Endothelial cell of umbilical vein (primary cell): ENCODE measurements at regions of chr6 and their contacts with region 1.

Region 1: GRCh38 chr6:89371849-89372505 is 19.5 kb upstream of the UBE2J1 start:
- DNase-seq: peak; percentile 61
- H3K4me3 ChIP-seq: no peak overlapping the region
- H3K27ac ChIP-seq: no peak overlapping the region
- H3K4me1 ChIP-seq: peaks cover 3% of the 10 kb centered on the region
- H3K27me3 ChIP-seq: no peaks in the 10 kb centered on the region
- CTCF ChIP-seq: peak; percentile 96 to 98
- POLR2A ChIP-seq: no peak

Region 2: DNA sequence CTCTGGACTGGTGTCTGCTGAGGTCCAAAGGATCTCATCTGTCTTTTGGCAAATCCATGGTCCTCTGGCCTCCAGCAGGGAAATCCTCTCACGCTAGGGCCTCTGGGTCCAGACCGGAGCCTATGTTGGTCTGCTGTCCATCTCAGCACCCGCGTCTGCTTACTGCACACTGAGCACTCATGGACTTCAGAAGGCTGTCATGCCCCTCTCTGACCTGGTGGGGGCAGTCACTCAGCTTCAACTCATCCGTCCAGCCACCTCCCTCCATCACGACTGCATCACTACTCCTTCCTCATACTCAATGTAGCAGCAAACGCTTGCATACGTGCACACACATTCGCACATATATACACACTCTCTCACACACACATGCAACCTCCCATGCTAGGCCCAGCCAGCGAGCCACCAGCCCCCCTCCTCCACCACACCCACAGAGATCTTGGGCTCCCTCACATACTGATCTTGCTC is 90.2 kb before region 1 on chr6:
- CTCF ChIA-PET with region 1: interaction called, 13 read pairs
- POLR2A ChIA-PET with region 1: no interaction called
- dilution Hi-C with region 1: no loop called
- intact Hi-C with region 1: loop called (anchors 1 kb)
- DNase-seq: peak; percentile 47
- H3K4me3 ChIP-seq: no peak overlapping the region
- H3K27ac ChIP-seq: no peak overlapping the region
- H3K4me1 ChIP-seq: no peaks in the 10 kb centered on the region
- H3K27me3 ChIP-seq: peaks cover 0 to 2% of the 10 kb centered on the region in 2 experiments
- CTCF ChIP-seq: peak; percentile 67 to 69
- POLR2A ChIP-seq: no peak

Region 3: DNA sequence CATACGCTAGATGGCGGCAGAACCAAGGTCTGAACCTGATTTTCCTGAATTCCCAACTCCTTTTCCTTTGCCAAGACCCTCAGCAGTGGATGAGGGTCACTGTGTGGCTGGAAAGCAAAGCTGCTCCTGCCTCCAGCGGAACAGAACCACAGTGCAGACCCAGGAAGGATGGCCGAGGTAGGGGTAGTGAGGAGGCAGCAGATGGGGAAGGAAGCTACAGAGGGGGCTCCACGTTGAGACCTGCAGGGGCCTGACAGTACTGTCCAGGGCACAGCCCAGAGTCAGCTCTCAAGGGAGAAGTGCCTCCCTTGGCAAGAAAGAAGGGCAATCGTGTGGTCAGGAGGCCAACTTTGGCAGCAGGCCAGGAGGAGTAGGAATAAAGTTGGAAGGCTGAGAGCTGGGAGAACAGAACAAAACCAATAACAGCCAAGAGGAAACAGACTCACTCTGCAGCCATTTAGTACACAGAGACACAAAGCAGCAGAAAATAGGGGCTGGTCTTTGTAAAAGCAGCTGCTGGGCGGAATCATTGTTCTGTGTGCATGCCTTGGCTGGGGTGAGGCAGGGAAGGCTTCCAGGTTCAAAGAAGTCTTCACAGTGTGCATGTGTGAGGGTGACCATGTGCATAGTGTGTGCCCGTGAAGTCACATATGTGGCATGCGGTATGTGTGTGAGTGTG is 60.0 kb before region 1 on chr6:
- CTCF ChIA-PET with region 1: interaction called, 102 read pairs
- POLR2A ChIA-PET with region 1: no interaction called
- dilution Hi-C with region 1: no loop called
- intact Hi-C with region 1: loop called (anchors 1 kb)
- DNase-seq: peak; percentile 95
- H3K4me3 ChIP-seq: no peak overlapping the region
- H3K27ac ChIP-seq: peak overlapping the region; percentile 67
- H3K4me1 ChIP-seq: peaks cover 22% of the 10 kb centered on the region
- H3K27me3 ChIP-seq: no peaks in the 10 kb centered on the region
- CTCF ChIP-seq: peak; percentile 51 to 81
- POLR2A ChIP-seq: no peak

Region 4: DNA sequence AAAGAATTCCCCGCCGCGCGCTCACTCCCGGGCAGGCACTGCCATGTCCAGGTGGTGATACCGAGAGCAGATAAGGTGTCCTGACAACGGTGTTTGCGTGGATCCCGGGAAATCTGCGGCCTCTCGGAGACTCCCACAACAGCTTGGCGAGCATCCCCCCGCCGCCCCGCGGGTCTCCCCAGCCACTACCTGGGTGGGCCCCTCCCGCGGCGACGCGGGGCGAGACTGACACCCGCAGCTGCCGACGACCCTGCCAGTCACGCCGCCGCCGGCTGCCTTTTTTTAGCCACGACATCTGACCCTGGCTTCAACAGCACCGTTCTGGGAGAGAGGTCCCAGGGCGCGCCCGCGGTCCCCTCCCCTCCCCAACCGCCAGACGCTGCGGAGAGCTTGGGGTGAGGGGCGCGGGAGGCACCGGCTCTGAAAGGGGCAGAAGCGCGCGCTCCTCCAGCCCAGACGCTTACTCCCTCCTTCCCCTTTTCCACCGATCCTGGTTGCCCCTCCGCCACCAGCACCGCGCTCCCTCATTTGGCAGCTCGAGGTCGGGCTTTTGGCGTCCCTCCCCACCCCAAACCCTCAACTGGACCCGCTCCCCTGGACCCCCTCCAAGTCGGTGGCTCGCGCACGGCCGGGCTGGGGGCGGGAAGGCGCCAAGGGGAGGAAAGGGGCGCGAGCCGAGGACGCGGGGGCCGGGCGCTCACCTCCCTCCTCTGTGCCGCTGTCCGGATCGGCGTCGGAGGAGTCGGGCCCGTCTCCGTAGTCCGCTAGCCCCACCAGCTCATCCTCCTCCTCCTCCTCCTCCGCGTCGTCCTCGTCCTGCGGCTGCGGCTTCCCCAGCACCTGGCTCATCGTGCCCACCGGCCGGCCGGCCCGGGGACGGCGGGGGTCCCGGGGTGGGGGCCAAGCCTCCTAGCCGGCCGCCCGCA is 39.4 kb after region 1 on chr6:
- CTCF ChIA-PET with region 1: interaction called, 7 read pairs
- POLR2A ChIA-PET with region 1: no interaction called
- dilution Hi-C with region 1: no loop called
- intact Hi-C with region 1: loop called (anchors 1 kb)
- DNase-seq: no peak
- H3K4me3 ChIP-seq: peak overlapping the region; percentile 28 to 38 (median 34)
- H3K27ac ChIP-seq: no peak overlapping the region
- H3K4me1 ChIP-seq: peaks cover 8% of the 10 kb centered on the region
- H3K27me3 ChIP-seq: peaks cover 51 to 58% of the 10 kb centered on the region in 2 experiments
- CTCF ChIP-seq: no peak
- POLR2A ChIP-seq: no peak

Region 5: DNA sequence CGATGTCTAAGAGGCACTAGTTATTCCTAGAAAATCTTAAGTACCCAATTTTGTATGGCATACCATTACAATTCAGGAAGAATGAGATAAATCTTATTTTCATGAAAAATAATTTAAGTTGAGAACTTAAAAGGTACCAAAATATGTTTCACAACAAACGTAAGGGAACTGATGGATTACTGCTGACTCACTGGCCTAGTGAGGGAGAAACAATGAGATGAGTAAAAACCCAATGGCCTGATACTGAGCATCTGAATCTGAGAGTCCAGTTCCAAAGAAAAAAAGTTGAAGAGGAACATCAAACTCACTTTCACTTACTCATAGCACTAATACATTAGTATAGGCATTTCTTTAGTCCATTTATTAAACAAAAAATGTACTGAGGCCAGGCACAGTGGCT is 391.6 kb after region 1 on chr6:
- CTCF ChIA-PET with region 1: no interaction called
- POLR2A ChIA-PET with region 1: no interaction called
- dilution Hi-C with region 1: no loop called
- intact Hi-C with region 1: no loop called
- DNase-seq: no peak
- H3K4me3 ChIP-seq: no peak overlapping the region
- H3K27ac ChIP-seq: no peak overlapping the region
- H3K4me1 ChIP-seq: no peaks in the 10 kb centered on the region
- H3K27me3 ChIP-seq: no peaks in the 10 kb centered on the region
- CTCF ChIP-seq: no peak
- POLR2A ChIP-seq: no peak